Activated CD4-positive, alpha-beta T cell treated with anti-CD3 and anti-CD28 coated beads for 36 hours (primary cell): ENCODE measurements at regions of chr2 and their contacts with region 1.

Region 1: DNA sequence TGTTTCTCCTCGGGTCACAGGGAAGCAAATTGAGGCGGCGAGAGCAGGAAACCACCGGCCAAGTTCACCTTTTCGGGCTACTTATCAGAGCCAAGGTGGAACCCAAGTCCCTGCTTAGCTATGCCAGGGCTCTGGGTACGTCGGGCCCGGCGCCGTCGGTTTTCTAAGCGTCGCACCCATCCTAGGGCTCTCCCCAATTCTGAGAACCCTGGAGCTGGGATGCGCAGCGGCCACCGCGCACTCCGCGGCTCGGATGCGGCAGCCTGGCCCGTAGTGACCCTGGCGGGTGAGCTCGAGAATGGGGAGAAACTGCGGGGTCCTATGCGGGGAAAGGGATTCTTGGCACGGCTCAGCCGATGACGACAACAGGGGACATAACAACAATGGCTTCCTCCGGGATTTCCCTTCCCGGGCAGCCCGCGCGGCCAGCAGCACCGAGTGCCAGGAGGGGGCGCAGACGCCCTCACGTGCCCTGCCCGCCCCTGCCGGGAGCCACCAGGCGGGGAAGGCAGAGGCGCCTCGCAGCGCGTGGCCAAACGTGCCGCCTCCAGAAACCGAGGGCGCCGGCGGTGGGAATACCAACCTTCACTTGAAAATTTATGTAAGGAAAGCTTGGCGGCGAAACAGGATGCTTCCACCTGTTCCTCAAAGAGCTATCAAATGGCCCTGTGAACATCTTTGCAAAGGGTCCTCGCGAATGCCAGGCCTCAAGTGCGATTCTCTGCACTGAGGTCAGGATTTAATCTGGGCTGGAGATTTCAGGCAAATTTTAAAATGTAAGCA is 2.1 kb upstream of the SLC30A3 start:
- DNase-seq: peak; percentile 80
- ATAC-seq: peak; percentile 67
- H3K4me3 Mint-ChIP-seq: peak overlapping the region; percentile 53
- H3K27ac Mint-ChIP-seq: no peak overlapping the region
- H3K4me1 Mint-ChIP-seq: peaks cover 23% of the 10 kb centered on the region
- H3K27me3 Mint-ChIP-seq: peaks cover 41% of the 10 kb centered on the region

Region 2: GRCh38 chr2:27308359-27308881 is 43.5 kb after region 1 on chr2 and contains the start of gene UCN:
- CTCF ChIA-PET with region 1: interaction called, 16 read pairs
- POLR2A ChIA-PET with region 1: no interaction called
- intact Hi-C with region 1: loop called in 1 of 2 experiments (anchors 5 kb)
- DNase-seq: no peak
- ATAC-seq: no peak
- H3K4me3 Mint-ChIP-seq: no peak within 1 kb of the TSS
- H3K27ac Mint-ChIP-seq: no peak within 1 kb of the TSS
- H3K4me1 Mint-ChIP-seq: no peaks in the 10 kb centered on the region
- H3K27me3 Mint-ChIP-seq: peaks cover 10% of the 10 kb centered on the region
- total RNA-seq, gene UCN: 1.4 to 1.5 TPM